Naive thymus-derived CD4-positive, alpha-beta T cell (primary cell): ENCODE measurements at regions of chrX and their contacts with region 1.

Region 1: GRCh38 chrX:137234661-137235402 is 201.0 kb upstream of the GPR101 start:
- DNase-seq: peak in 7 of 9 donors; percentile 7 to 50 (median 35)
- ATAC-seq: peak; percentile 63
- H3K4me3 ChIP-seq: no peak overlapping the region
- H3K4me3 Mint-ChIP-seq: peak overlapping the region in 9 of 10 donors; percentile 63 to 85 (median 73)
- H3K27ac ChIP-seq: peak overlapping the region; percentile 38
- H3K27ac Mint-ChIP-seq: peak overlapping the region; percentile 38 to 95 (median 89)
- H3K4me1 ChIP-seq: peaks cover 0 to 36% of the 10 kb centered on the region in 2 donors
- H3K4me1 Mint-ChIP-seq: peaks cover 0 to 72% (median 53%) of the 10 kb centered on the region in 7 donors
- H3K27me3 ChIP-seq: no peaks in the 10 kb centered on the region
- H3K27me3 Mint-ChIP-seq: no peaks in the 10 kb centered on the region

Region 2: GRCh38 chrX:137178392-137178791 is 56.4 kb before region 1 on chrX:
- CTCF ChIA-PET with region 1: no interaction called
- POLR2A ChIA-PET with region 1: no interaction called
- intact Hi-C with region 1: loop called in 1 of 2 experiments (anchors 10 kb)
- DNase-seq: no peak
- ATAC-seq: no peak
- H3K4me3 ChIP-seq: no peak overlapping the region
- H3K4me3 Mint-ChIP-seq: no peak overlapping the region
- H3K27ac ChIP-seq: no peak overlapping the region
- H3K27ac Mint-ChIP-seq: no peak overlapping the region
- H3K4me1 ChIP-seq: no peaks in the 10 kb centered on the region
- H3K4me1 Mint-ChIP-seq: peaks cover 0 to under 1% (median 0%) of the 10 kb centered on the region in 7 donors
- H3K27me3 ChIP-seq: no peaks in the 10 kb centered on the region
- H3K27me3 Mint-ChIP-seq: peaks cover 0 to 14% (median 10%) of the 10 kb centered on the region in 5 donors